ENCODE measurements at regions of chr5 and their contacts with region 1.

Region 1: GRCh38 chr5:152113401-152113800 is 188.8 kb upstream of the GLRA1 start:
- DNase-seq: peak in 13 of 14 experiments; percentile 4 to 79 (median 23)
- ATAC-seq: peak; percentile 94
- H3K4me3 ChIP-seq: no peak overlapping the region
- H3K4me3 Mint-ChIP-seq: no peak overlapping the region
- H3K27ac ChIP-seq: no peak overlapping the region
- H3K27ac Mint-ChIP-seq: no peak overlapping the region
- H3K4me1 ChIP-seq: peaks cover 3% of the 10 kb centered on the region
- H3K4me1 Mint-ChIP-seq: peaks cover 9% of the 10 kb centered on the region
- H3K27me3 ChIP-seq: no peaks in the 10 kb centered on the region
- H3K27me3 Mint-ChIP-seq: peaks cover 6% of the 10 kb centered on the region
- CTCF ChIP-seq: no peak

Region 2: GRCh38 chr5:151931260-151931659 is 182.1 kb before region 1 on chr5:
- CTCF ChIA-PET with region 1: no interaction called
- POLR2A ChIA-PET with region 1: no interaction called
- intact Hi-C with region 1: loop called in 1 of 2 experiments (anchors 5 kb)
- DNase-seq: no peak
- ATAC-seq: no peak
- H3K4me3 ChIP-seq: no peak overlapping the region
- H3K4me3 Mint-ChIP-seq: no peak overlapping the region
- H3K27ac ChIP-seq: no peak overlapping the region
- H3K27ac Mint-ChIP-seq: no peak overlapping the region
- H3K4me1 ChIP-seq: no peaks in the 10 kb centered on the region
- H3K4me1 Mint-ChIP-seq: no peaks in the 10 kb centered on the region
- H3K27me3 ChIP-seq: peaks cover 0 to 1% of the 10 kb centered on the region in 2 experiments
- H3K27me3 Mint-ChIP-seq: peaks cover 9% of the 10 kb centered on the region
- CTCF ChIP-seq: no peak

Region 3: DNA sequence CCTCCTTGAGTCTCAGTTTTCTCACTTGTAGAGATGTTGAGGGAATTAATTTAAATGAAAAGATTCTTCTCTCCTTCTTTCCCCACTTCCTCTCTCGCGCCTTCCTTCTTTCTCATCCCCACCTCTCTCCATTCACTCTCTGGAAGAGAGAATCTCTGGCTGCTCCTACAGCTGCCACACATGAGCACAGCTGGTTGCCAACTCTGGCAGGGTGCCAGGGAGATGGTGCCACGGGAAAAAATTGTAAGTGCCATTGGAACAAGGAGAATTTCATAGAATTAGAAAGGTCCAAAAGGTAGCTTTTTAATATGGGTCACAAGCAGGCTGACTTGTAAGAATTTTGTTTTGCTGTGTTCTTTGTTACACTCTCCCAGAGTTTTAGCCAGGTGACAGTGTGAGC is 163.5 kb before region 1 on chr5:
- CTCF ChIA-PET with region 1: no interaction called
- POLR2A ChIA-PET with region 1: no interaction called
- intact Hi-C with region 1: loop called in 1 of 2 experiments (anchors 10 kb)
- DNase-seq: no peak
- ATAC-seq: no peak
- H3K4me3 ChIP-seq: no peak overlapping the region
- H3K4me3 Mint-ChIP-seq: no peak overlapping the region
- H3K27ac ChIP-seq: no peak overlapping the region
- H3K27ac Mint-ChIP-seq: no peak overlapping the region
- H3K4me1 ChIP-seq: peaks cover 33% of the 10 kb centered on the region
- H3K4me1 Mint-ChIP-seq: peaks cover 49% of the 10 kb centered on the region
- H3K27me3 ChIP-seq: peaks cover 0 to 6% of the 10 kb centered on the region in 2 experiments
- H3K27me3 Mint-ChIP-seq: no peaks in the 10 kb centered on the region
- CTCF ChIP-seq: no peak